CD4-positive, alpha-beta memory T cell (primary cell): ENCODE measurements at regions of chr1 and their contacts with region 1.

Region 1: DNA sequence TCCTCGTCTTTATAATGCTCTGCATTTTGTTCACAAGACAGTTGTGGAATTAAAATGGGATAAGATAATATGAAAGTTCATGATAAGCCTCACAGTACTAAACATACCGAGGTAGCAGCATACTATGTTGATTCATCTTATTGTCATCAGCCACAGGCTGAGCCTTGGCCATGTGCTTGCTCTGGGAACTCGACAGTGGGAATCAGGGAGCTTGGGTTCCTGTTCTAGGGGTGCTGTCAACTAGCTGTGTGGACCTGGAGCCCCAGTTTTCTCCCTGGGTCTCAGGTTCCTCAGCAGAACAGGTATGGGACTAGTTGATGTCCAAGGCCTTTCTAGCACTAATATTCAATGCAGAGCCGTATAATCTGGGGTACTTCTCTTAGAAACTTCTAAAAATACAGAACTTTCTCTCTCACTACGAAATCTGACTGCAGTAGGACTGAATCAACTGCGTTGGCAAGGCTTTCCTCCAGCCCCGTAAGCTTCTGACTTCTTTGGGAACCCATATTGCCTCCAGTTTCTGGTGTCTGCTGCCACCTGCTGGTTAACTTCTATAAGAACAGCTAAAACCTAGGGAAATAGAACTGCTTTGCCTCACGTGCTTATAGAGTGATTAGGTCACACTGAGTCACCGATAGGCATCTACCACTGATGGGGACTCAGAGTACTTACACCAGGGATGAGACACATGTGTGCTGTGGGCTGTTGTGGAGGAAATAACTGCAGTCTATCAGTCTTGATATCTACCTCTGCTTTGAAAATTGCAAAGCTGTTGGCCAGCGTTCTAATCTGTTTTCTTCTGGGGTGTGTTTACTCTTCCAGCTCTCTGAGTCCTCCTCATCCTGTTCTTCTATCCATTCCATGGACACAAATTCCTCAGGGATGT is 110.9 kb downstream of the RGL1 start:
- DNase-seq: peak; percentile 78 to 88 (median 81)
- H3K4me3 ChIP-seq: no peak overlapping the region
- H3K4me3 Mint-ChIP-seq: peak overlapping the region in 2 of 8 donors; percentile 48 to 68
- H3K27ac ChIP-seq: no peak overlapping the region
- H3K27ac Mint-ChIP-seq: peak overlapping the region in 6 of 7 donors; percentile 41 to 84 (median 54)
- H3K4me1 ChIP-seq: peaks cover 5% of the 10 kb centered on the region
- H3K4me1 Mint-ChIP-seq: peaks cover 8 to 12% (median 10%) of the 10 kb centered on the region in 4 donors
- H3K27me3 ChIP-seq: no peaks in the 10 kb centered on the region
- H3K27me3 Mint-ChIP-seq: no peaks in the 10 kb centered on the region

Region 2: DNA sequence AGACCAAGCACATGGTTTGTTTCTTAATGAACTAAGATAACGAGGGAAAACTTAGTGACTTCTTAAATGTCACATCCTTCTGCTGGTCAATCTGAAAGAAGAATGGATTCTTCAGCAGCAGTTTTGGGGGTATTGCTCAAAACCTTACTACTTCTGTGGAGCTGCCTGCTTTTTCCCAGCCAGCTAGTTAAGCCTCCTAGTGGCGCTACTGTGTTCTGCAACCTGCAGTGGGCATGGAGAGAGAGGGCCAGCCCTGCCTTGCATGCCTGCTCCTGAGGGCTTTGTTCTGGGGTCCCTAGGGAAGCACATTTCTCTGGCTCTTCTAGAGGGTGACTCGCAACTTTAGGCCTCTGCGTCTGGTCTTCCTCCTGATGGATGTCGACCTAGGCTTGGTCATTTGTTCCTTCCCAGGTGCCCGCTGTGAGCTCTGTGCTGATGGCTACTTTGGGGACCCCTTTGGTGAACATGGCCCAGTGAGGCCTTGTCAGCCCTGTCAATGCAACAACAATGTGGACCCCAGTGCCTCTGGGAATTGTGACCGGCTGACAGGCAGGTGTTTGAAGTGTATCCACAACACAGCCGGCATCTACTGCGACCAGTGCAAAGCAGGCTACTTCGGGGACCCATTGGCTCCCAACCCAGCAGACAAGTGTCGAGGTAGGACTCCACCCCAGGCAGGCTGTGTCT is 687.8 kb before region 1 on chr1:
- CTCF ChIA-PET with region 1: no interaction called
- POLR2A ChIA-PET with region 1: no interaction called
- intact Hi-C with region 1: no loop called
- DNase-seq: no peak
- H3K4me3 ChIP-seq: no peak overlapping the region
- H3K4me3 Mint-ChIP-seq: no peak overlapping the region
- H3K27ac ChIP-seq: no peak overlapping the region
- H3K27ac Mint-ChIP-seq: no peak overlapping the region
- H3K4me1 ChIP-seq: no peaks in the 10 kb centered on the region
- H3K4me1 Mint-ChIP-seq: no peaks in the 10 kb centered on the region
- H3K27me3 ChIP-seq: no peaks in the 10 kb centered on the region
- H3K27me3 Mint-ChIP-seq: peaks cover 5 to 8% of the 10 kb centered on the region in 2 donors

Region 3: GRCh38 chr1:183543619-183544204 is 372.2 kb before region 1 on chr1:
- CTCF ChIA-PET with region 1: no interaction called
- POLR2A ChIA-PET with region 1: no interaction called
- intact Hi-C with region 1: loop called (anchors 2 kb)
- DNase-seq: peak in 4 of 5 donors; percentile 36 to 47 (median 41)
- H3K4me3 ChIP-seq: no peak overlapping the region
- H3K4me3 Mint-ChIP-seq: no peak overlapping the region
- H3K27ac ChIP-seq: no peak overlapping the region
- H3K27ac Mint-ChIP-seq: peak overlapping the region in 4 of 7 donors; percentile 8 to 87 (median 28)
- H3K4me1 ChIP-seq: no peaks in the 10 kb centered on the region
- H3K4me1 Mint-ChIP-seq: peaks cover 0 to 5% (median 1%) of the 10 kb centered on the region in 4 donors
- H3K27me3 ChIP-seq: no peaks in the 10 kb centered on the region
- H3K27me3 Mint-ChIP-seq: no peaks in the 10 kb centered on the region

Region 4: DNA sequence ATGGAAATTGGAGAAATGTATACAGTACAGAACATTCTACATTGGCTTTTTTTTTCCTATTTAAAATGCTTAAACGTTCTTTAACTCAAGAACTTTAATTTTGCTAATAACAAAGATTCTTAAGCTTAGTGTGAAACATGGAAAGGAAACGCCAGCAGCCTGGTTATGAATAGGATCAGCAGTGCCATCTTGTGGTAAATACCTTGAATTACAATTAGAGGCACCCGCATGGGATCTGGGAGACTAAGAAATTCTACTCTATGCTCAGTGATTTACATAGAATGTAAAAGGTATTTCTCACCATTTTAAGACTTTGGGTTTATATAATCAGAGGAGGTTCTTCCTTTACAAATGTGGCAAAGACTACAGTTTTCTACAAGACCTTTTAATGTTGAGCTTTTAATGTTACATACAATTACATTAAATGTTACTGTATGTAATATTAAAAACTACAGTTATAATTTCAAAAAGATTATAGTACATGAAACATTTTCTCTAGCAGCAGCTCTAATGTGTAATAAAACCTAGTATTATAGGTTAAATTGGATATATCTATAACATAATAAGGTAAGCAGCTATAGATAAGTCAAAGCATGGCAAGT is 230.7 kb before region 1 on chr1:
- CTCF ChIA-PET with region 1: interaction called, 75 read pairs
- POLR2A ChIA-PET with region 1: interaction called, 6 read pairs
- intact Hi-C with region 1: loop called (anchors 1 kb)
- DNase-seq: peak in 4 of 5 donors; percentile 51 to 57 (median 56)
- H3K4me3 ChIP-seq: no peak overlapping the region
- H3K4me3 Mint-ChIP-seq: no peak overlapping the region
- H3K27ac ChIP-seq: no peak overlapping the region
- H3K27ac Mint-ChIP-seq: no peak overlapping the region
- H3K4me1 ChIP-seq: no peaks in the 10 kb centered on the region
- H3K4me1 Mint-ChIP-seq: no peaks in the 10 kb centered on the region
- H3K27me3 ChIP-seq: no peaks in the 10 kb centered on the region
- H3K27me3 Mint-ChIP-seq: peaks cover 4 to 12% of the 10 kb centered on the region in 2 donors

Region 5: GRCh38 chr1:183891158-183891856 is 24.6 kb before region 1 on chr1:
- CTCF ChIA-PET with region 1: interaction called, 47 read pairs
- POLR2A ChIA-PET with region 1: interaction called, 7 read pairs
- intact Hi-C with region 1: no loop called
- DNase-seq: no peak
- H3K4me3 ChIP-seq: no peak overlapping the region
- H3K4me3 Mint-ChIP-seq: no peak overlapping the region
- H3K27ac ChIP-seq: no peak overlapping the region
- H3K27ac Mint-ChIP-seq: no peak overlapping the region
- H3K4me1 ChIP-seq: peaks cover 34% of the 10 kb centered on the region
- H3K4me1 Mint-ChIP-seq: peaks cover 34 to 42% (median 38%) of the 10 kb centered on the region in 4 donors
- H3K27me3 ChIP-seq: no peaks in the 10 kb centered on the region
- H3K27me3 Mint-ChIP-seq: no peaks in the 10 kb centered on the region

Region 6: GRCh38 chr1:183933528-183934179 is 17.8 kb after region 1 on chr1:
- CTCF ChIA-PET with region 1: interaction called, 16 read pairs
- POLR2A ChIA-PET with region 1: no interaction called
- intact Hi-C with region 1: no loop called
- DNase-seq: no peak
- H3K4me3 ChIP-seq: no peak overlapping the region
- H3K4me3 Mint-ChIP-seq: no peak overlapping the region
- H3K27ac ChIP-seq: no peak overlapping the region
- H3K27ac Mint-ChIP-seq: peak overlapping the region in 1 of 7 donors; percentile 70
- H3K4me1 ChIP-seq: no peaks in the 10 kb centered on the region
- H3K4me1 Mint-ChIP-seq: peaks cover 0 to 2% (median 0%) of the 10 kb centered on the region in 4 donors
- H3K27me3 ChIP-seq: no peaks in the 10 kb centered on the region
- H3K27me3 Mint-ChIP-seq: peaks cover 0 to 2% of the 10 kb centered on the region in 2 donors

Region 7: GRCh38 chr1:184222652-184223052 is 306.8 kb after region 1 on chr1:
- CTCF ChIA-PET with region 1: interaction called, 4 read pairs
- POLR2A ChIA-PET with region 1: no interaction called
- intact Hi-C with region 1: loop called (anchors 5 kb)
- DNase-seq: peak in 4 of 5 donors; percentile 18 to 34 (median 24)
- H3K4me3 ChIP-seq: no peak overlapping the region
- H3K4me3 Mint-ChIP-seq: peak overlapping the region in 3 of 8 donors; percentile 10 to 46 (median 18)
- H3K27ac ChIP-seq: no peak overlapping the region
- H3K27ac Mint-ChIP-seq: peak overlapping the region in 1 of 7 donors; percentile 18
- H3K4me1 ChIP-seq: no peaks in the 10 kb centered on the region
- H3K4me1 Mint-ChIP-seq: no peaks in the 10 kb centered on the region
- H3K27me3 ChIP-seq: no peaks in the 10 kb centered on the region
- H3K27me3 Mint-ChIP-seq: peaks cover 3 to 4% of the 10 kb centered on the region in 2 donors